HepG2 (cell line): ENCODE measurements at regions of chr2 and their contacts with region 1.

Region 1: DNA sequence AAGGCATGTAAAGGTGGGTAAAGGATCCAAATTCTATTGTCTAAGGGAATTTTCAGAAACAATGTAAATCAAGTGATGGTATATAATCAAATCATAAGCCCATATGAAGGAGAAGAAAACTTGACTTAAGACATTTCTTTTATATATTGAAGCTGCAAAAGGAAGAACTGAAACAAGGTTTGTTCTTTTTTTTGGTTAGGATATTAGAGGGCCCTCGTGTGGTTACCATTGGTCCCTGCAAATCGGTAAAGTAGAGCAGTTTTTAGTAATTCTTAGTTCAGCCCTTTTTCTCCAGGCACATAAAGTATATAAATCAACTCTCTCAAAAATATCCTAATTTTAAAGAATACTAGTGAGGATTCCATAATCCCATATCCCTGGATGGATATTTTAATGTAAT is 105.6 kb upstream of the STK17B start:
- DNase-seq: no peak
- ATAC-seq: peak; percentile 41; the same call in 1 of the 3 replicates
- H3K4me3 ChIP-seq: no peak overlapping the region
- H3K27ac ChIP-seq: no peak overlapping the region
- H3K4me1 ChIP-seq: peaks cover 11% of the 10 kb centered on the region
- H3K27me3 ChIP-seq: no peaks in the 10 kb centered on the region
- CTCF ChIP-seq: peak; percentile 49
- EP300 ChIP-seq: no peak
- POLR2A ChIP-seq: no peak
- RAD21 ChIP-seq: peak; percentile 36; the same call in 1 of the 2 replicates

Region 2: DNA sequence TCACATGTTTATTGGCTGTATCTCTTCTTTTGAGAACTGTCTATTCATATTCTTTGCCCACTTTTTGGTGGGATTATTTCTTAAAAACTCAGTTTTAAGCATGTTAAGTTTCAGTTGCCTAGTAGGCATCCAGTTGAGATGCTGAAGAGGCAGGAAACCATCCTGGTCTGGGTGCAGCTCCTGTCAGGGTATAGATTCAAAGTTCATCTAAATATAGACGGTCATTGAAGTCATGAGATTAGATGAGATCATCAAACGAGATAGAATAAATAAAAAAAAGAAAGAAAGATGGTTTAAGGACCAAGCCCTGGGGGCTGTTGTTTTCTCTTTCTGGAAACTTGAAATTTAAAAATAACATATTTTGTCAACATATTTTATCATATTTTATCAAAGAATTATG is 199.2 kb before region 1 on chr2:
- CTCF ChIA-PET with region 1: interaction called, 6 read pairs
- POLR2A ChIA-PET with region 1: no interaction called
- in situ Hi-C with region 1: no loop called
- intact Hi-C with region 1: loop called (anchors 1 kb)
- DNase-seq: no peak
- ATAC-seq: 0 out of 3 replicates have a peak, but pooled peaks have one; percentile 31
- H3K4me3 ChIP-seq: no peak overlapping the region
- H3K27ac ChIP-seq: no peak overlapping the region
- H3K4me1 ChIP-seq: peaks cover 19% of the 10 kb centered on the region
- H3K27me3 ChIP-seq: no peaks in the 10 kb centered on the region
- CTCF ChIP-seq: no peak
- EP300 ChIP-seq: no peak
- POLR2A ChIP-seq: no peak
- RAD21 ChIP-seq: no peak

Region 3: DNA sequence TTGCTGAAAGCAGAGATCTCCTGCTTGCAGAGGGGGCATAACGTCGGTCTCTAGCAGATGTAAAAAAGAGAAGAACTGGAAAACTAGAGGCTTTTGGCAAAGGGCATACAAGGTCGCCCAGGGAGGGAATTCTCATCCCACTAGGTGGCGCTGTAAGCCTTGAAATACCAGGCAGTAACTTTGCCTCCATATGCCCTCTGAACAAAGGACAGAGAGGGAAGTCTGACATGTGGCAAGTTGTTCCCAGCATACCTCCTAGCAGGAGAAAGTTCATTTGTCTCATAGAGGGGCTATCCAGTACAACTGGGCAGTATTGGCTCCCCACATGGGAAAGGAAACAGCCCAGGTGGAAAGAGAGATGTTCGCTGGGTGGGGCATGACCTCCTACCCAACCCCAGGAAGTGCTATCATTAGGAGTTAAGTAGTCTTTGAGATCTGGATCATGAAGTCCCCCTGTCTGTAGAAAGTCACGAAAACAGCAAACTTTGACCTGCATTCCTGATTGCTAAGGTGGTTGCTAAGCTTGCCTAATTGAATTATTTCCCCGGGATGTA is 145.5 kb before region 1 on chr2:
- CTCF ChIA-PET with region 1: interaction called, 33 read pairs
- POLR2A ChIA-PET with region 1: no interaction called
- in situ Hi-C with region 1: loop called (anchors 5 kb)
- intact Hi-C with region 1: loop called (anchors 1 kb)
- DNase-seq: peak; percentile 83
- ATAC-seq: peak; percentile 98
- H3K4me3 ChIP-seq: no peak overlapping the region; a peak in 1 of 6 replicates
- H3K27ac ChIP-seq: no peak overlapping the region
- H3K4me1 ChIP-seq: peaks cover 8% of the 10 kb centered on the region
- H3K27me3 ChIP-seq: no peaks in the 10 kb centered on the region
- CTCF ChIP-seq: peak; percentile 96
- EP300 ChIP-seq: no peak
- POLR2A ChIP-seq: no peak
- RAD21 ChIP-seq: peak; percentile 93

Region 4: GRCh38 chr2:196171248-196171871 is 105.6 kb before region 1 on chr2 and contains the start of gene STK17B:
- CTCF ChIA-PET with region 1: no interaction called
- POLR2A ChIA-PET with region 1: no interaction called
- in situ Hi-C with region 1: no loop called
- intact Hi-C with region 1: loop called (anchors 2 kb)
- DNase-seq: peak; percentile 89
- ATAC-seq: peak; percentile 92
- H3K4me3 ChIP-seq: peak within 1 kb of the TSS; percentile 84 to 89 (median 88)
- H3K27ac ChIP-seq: peak within 1 kb of the TSS; percentile 39
- H3K4me1 ChIP-seq: peaks cover 16% of the 10 kb centered on the region
- H3K27me3 ChIP-seq: peaks cover 3 to 29% of the 10 kb centered on the region in 2 experiments; a peak in 4 of 5 replicates
- CTCF ChIP-seq: peak; percentile 22; the same call in 1 of the 2 replicates
- EP300 ChIP-seq: no peak
- POLR2A ChIP-seq: peak; percentile 81 to 92
- RAD21 ChIP-seq: no peak; the same call in 1 of the 2 replicates
- total RNA-seq, gene STK17B: 4.5 and 7.7 TPM in 2 replicates

Region 5: DNA sequence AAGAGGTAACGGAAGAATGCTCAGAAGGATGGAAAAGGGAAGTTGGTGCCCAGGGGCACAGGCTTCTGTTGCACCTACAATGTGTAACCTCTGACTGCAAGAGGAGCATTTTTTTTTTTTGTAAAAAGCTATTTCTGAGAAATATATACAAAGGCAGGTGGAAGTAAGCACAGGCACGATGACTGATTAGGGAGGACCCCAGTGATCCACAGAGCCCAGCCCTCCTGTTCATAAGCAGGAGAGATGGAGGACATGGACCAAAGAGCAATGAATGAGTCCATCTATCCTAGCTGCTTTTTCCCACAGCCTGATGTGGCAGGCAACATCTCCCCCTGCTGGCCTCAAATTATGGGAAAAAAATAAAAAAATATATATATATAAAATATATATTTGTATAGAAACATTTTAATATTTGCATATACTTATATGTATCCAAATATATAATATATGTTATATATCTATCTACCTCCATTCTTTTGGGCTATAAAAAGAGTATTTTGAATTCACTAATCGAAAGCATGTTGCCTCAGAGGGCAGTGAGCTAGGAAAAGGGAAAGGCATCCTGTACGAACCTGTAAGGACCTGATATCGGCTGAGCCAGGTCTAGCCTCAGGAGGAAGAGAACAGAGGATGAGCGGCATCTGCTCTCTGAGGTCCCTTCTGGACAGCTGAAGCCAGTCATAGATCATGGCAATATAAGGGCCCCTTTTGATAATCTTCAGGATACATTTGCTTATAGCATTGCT is 60.4 kb after region 1 on chr2:
- CTCF ChIA-PET with region 1: interaction called, 4 read pairs
- POLR2A ChIA-PET with region 1: no interaction called
- in situ Hi-C with region 1: no loop called
- intact Hi-C with region 1: loop called (anchors 1 kb)
- DNase-seq: peak; percentile 10
- ATAC-seq: peak; percentile 67
- H3K4me3 ChIP-seq: no peak overlapping the region
- H3K27ac ChIP-seq: no peak overlapping the region
- H3K4me1 ChIP-seq: no peaks in the 10 kb centered on the region
- H3K27me3 ChIP-seq: no peaks in the 10 kb centered on the region
- CTCF ChIP-seq: peak; percentile 50
- EP300 ChIP-seq: no peak
- POLR2A ChIP-seq: no peak
- RAD21 ChIP-seq: no peak